ENCODE measurements at regions of chr9 and their contacts with region 1.

Region 1: GRCh38 chr9:130305381-130305780 is 39.8 kb downstream of the HMCN2 start:
- DNase-seq: no peak
- H3K4me3 ChIP-seq: no peak overlapping the region
- CTCF ChIP-seq: no peak

Region 2: GRCh38 chr9:130199605-130200004 is 105.8 kb before region 1 on chr9:
- in situ Hi-C with region 1: no loop called
- DNase-seq: peak; percentile 91
- H3K4me3 ChIP-seq: no peak overlapping the region
- CTCF ChIP-seq: no peak

Region 3: DNA sequence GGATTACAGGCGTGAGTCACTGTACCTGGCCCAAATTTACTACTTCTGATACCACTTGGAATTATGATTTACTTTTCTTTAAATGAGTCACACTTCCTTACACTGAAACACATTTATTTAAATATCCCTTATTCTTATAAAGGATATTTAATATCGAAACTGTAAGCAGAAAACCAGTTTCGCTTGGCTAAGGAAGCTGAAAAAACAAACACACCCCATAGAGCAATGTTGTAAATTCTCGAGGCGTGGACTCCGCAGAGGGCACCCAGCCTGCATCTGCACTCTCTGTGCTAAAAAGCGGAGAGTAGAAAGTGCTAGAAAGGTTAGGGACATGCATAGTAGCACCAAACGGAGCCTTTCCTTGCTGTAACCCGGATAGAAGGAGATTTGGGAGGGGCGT is 46.7 kb after region 1 on chr9:
- in situ Hi-C with region 1: loop called (anchors 5 kb)
- DNase-seq: no peak
- H3K4me3 ChIP-seq: no peak overlapping the region
- CTCF ChIP-seq: no peak

Measured in astrocyte of the cerebellum (primary cell).